ENCODE measurements at regions of chrX and their contacts with region 1.

Region 1: GRCh38 chrX:129654419-129655165 is at the start of gene APLN:
- DNase-seq: peak; percentile 55
- H3K4me3 ChIP-seq: peak within 1 kb of the TSS; percentile 58 to 78 (median 67)
- H3K27ac ChIP-seq: peak within 1 kb of the TSS; percentile 69
- H3K4me1 ChIP-seq: peaks cover 42% of the 10 kb centered on the region
- H3K27me3 ChIP-seq: no peaks in the 10 kb centered on the region
- CTCF ChIP-seq: no peak
- POLR2A ChIP-seq: peak; percentile 92
- total RNA-seq, gene APLN: 465 and 466 TPM in 2 replicates

Region 2: DNA sequence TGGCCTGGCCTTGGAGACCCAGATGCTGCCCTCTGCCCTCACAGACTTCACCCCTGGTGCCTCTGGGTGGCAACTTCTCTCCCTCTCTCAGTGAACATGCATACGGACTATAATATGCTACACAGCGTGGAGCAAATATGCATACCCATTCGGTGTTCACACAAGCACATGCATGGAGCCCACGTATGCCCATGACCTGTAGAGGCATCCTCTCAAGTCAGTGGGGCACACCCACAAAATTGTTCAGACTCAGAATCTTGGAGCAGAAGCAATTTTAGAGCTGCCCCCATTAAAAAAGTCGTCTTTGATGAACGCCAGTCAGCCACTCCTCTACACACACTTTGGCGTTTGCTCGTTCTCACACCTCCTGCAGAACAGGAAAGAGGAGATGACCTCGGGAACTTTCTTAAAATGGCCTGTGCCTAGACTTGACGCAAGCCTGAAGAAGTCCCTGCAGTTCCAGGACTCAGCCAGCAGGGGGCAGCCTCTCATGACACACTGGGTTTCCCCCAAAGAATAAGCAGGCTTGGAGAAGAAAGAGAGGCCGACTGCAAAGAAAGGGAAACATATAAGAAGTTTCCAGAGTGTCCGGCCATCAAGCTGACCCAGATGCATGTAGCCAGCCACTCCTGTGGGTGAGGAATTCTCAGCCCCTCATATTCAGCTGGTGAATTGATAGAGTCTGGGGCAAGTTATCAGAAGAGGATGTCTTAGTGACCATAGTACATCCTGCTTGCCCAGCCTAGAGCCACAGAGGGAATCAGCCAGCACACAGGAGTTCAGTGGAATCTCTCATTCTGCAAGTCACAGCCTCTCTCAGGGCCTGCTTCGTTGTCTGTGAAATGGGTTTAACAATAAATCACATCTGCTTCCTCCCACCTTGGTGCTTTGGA is 17.1 kb before region 1 on chrX:
- CTCF ChIA-PET with region 1: interaction called, 10 read pairs
- POLR2A ChIA-PET with region 1: no interaction called
- dilution Hi-C with region 1: no loop called
- intact Hi-C with region 1: loop called (anchors 1 kb)
- DNase-seq: peak; percentile 69
- H3K4me3 ChIP-seq: no peak overlapping the region
- H3K27ac ChIP-seq: peak overlapping the region; percentile 1
- H3K4me1 ChIP-seq: peaks cover 7% of the 10 kb centered on the region
- H3K27me3 ChIP-seq: no peaks in the 10 kb centered on the region
- CTCF ChIP-seq: peak; percentile 78 to 79
- POLR2A ChIP-seq: no peak

Region 3: DNA sequence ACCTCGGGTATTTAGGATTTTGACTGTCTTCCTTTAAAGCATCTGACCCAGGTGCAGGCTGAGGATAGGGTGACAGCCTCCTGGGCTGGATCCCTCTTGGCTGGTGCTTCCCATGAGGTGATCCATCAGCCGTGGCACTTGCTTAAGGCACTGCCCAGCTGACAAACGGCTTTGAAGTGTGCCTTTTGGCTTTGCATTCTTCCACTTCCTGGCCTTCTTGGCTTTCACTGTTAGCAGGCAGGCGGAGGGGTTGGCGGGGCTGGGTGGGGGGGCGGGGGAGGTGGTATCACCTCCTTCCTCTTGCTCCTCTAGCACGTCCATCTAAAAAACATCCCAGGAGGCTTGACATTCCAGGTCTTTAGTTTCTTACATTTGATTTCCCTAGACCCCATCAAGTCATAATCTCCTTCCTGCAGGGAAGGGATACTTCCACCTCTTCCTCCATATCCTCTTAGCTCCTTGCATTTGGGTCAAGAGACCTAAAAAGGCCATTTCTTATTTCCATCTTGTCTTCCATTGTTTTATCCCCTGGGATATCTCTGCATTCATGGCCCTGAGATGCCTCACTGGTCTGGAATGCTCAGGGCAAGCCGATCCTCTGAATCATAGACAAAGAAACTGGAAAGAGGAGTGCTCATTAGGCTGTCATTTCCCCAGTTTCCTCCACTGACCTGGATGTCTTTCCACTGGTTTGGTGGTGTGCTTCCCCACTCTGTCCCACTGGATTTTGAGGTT is 11.5 kb after region 1 on chrX:
- CTCF ChIA-PET with region 1: interaction called, 9 read pairs
- POLR2A ChIA-PET with region 1: interaction called, 16 read pairs
- dilution Hi-C with region 1: no loop called
- intact Hi-C with region 1: loop called (anchors 1 kb)
- DNase-seq: peak; percentile 87
- H3K4me3 ChIP-seq: no peak overlapping the region
- H3K27ac ChIP-seq: peak overlapping the region; percentile 88
- H3K4me1 ChIP-seq: peaks cover 56% of the 10 kb centered on the region
- H3K27me3 ChIP-seq: no peaks in the 10 kb centered on the region
- CTCF ChIP-seq: no peak
- POLR2A ChIP-seq: peak; percentile 2

Region 4: GRCh38 chrX:129678614-129679195 is 24.1 kb after region 1 on chrX:
- CTCF ChIA-PET with region 1: interaction called, 3 read pairs
- POLR2A ChIA-PET with region 1: no interaction called
- dilution Hi-C with region 1: no loop called
- intact Hi-C with region 1: loop called (anchors 2 kb)
- DNase-seq: peak; percentile 1
- H3K4me3 ChIP-seq: peak overlapping the region in 1 of 3 experiments; percentile 25
- H3K27ac ChIP-seq: peak overlapping the region; percentile 15
- H3K4me1 ChIP-seq: peaks cover 19% of the 10 kb centered on the region
- H3K27me3 ChIP-seq: no peaks in the 10 kb centered on the region
- CTCF ChIP-seq: no peak
- POLR2A ChIP-seq: no peak

Region 5: GRCh38 chrX:129798888-129799287 is 144.3 kb after region 1 on chrX:
- CTCF ChIA-PET with region 1: no interaction called
- POLR2A ChIA-PET with region 1: no interaction called
- dilution Hi-C with region 1: no loop called
- intact Hi-C with region 1: no loop called
- DNase-seq: no peak
- H3K4me3 ChIP-seq: no peak overlapping the region
- H3K27ac ChIP-seq: no peak overlapping the region
- H3K4me1 ChIP-seq: no peaks in the 10 kb centered on the region
- H3K27me3 ChIP-seq: no peaks in the 10 kb centered on the region
- CTCF ChIP-seq: no peak
- POLR2A ChIP-seq: no peak